T-cell (primary cell): ENCODE measurements at regions of chr14 and their contacts with region 1.

Region 1: GRCh38 chr14:100192672-100193416 is 33.4 kb upstream of the DEGS2 start:
- DNase-seq: peak; percentile 98 to 100 (median 99)
- ATAC-seq: peak; percentile 98 to 99 (median 99)
- H3K4me3 ChIP-seq: peak overlapping the region; percentile 39 to 59
- H3K4me3 Mint-ChIP-seq: peak overlapping the region; percentile 55 to 69 (median 56)
- H3K27ac ChIP-seq: peak overlapping the region; percentile 88
- H3K27ac Mint-ChIP-seq: peak overlapping the region; percentile 94 to 96
- H3K4me1 ChIP-seq: peaks cover 0 to 14% of the 10 kb centered on the region in 2 experiments
- H3K4me1 Mint-ChIP-seq: peaks cover 9 to 11% (median 11%) of the 10 kb centered on the region in 3 donors
- H3K27me3 ChIP-seq: no peaks in the 10 kb centered on the region
- H3K27me3 Mint-ChIP-seq: no peaks in the 10 kb centered on the region

Region 2: GRCh38 chr14:99971087-99971940 is 221.5 kb before region 1 on chr14:
- CTCF ChIA-PET with region 1: interaction called in 1 of 2 experiments, 19 read pairs
- POLR2A ChIA-PET with region 1: no interaction called
- DNase-seq: peak; percentile 49 to 87 (median 72)
- ATAC-seq: peak; percentile 80 to 88 (median 86)
- H3K4me3 ChIP-seq: peak overlapping the region; percentile 25 to 36
- H3K4me3 Mint-ChIP-seq: peak overlapping the region; percentile 73 to 94 (median 76)
- H3K27ac ChIP-seq: no peak overlapping the region
- H3K27ac Mint-ChIP-seq: peak overlapping the region in 1 of 2 donors; percentile 22
- H3K4me1 ChIP-seq: peaks cover 0 to 12% of the 10 kb centered on the region in 2 experiments
- H3K4me1 Mint-ChIP-seq: peaks cover 10 to 20% (median 14%) of the 10 kb centered on the region in 3 donors
- H3K27me3 ChIP-seq: peaks cover 0 to 31% of the 10 kb centered on the region in 2 experiments
- H3K27me3 Mint-ChIP-seq: peaks cover 14 to 16% of the 10 kb centered on the region in 2 donors

Region 3: DNA sequence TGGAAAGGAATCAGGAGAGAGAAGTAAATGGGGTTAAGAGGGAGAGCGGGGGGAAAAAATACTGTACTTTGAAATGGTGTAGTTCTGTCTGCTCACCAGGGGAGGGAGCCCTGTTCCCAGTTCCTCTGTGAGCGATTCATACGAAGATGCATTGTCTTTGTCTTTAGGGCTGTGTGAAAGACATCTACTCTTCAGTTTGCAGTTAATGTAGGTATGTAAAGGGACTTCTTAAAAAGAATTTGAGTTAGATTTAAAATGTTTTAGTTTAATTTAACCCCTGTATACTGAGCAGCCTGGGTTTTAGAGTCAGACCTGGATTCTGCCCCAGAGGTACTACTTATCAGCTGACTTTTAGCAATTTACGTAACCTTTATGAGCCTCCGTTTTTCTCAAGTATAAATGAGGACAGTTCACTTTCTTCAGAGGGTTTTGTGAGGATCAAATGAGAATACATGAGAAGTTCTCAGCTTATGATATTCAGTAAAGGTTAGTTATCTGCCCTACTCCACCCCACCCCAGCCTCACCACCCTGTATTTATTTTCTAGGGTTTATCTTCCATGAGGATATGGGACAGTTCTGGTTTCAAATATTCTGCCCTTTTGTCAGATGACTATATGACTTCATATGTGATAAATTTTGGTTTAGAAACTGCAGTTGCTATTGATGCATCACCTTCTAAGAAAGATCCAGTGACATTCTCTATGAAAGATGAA is 210.2 kb before region 1 on chr14:
- CTCF ChIA-PET with region 1: interaction called, 5 to 24 read pairs
- POLR2A ChIA-PET with region 1: interaction called in 1 of 2 experiments, 3 read pairs
- DNase-seq: peak; percentile 29 to 86 (median 52)
- ATAC-seq: peak; percentile 94 to 95 (median 94)
- H3K4me3 ChIP-seq: no peak overlapping the region
- H3K4me3 Mint-ChIP-seq: no peak overlapping the region
- H3K27ac ChIP-seq: no peak overlapping the region
- H3K27ac Mint-ChIP-seq: no peak overlapping the region
- H3K4me1 ChIP-seq: peaks cover 0 to 16% of the 10 kb centered on the region in 2 experiments
- H3K4me1 Mint-ChIP-seq: peaks cover 8 to 14% (median 13%) of the 10 kb centered on the region in 3 donors
- H3K27me3 ChIP-seq: no peaks in the 10 kb centered on the region
- H3K27me3 Mint-ChIP-seq: no peaks in the 10 kb centered on the region

Region 4: GRCh38 chr14:100096570-100096971 is 96.3 kb before region 1 on chr14:
- CTCF ChIA-PET with region 1: no interaction called
- POLR2A ChIA-PET with region 1: no interaction called
- DNase-seq: no peak
- ATAC-seq: no peak
- H3K4me3 ChIP-seq: no peak overlapping the region
- H3K4me3 Mint-ChIP-seq: peak overlapping the region in 1 of 3 donors; percentile 81
- H3K27ac ChIP-seq: no peak overlapping the region
- H3K27ac Mint-ChIP-seq: peak overlapping the region; percentile 85 to 89
- H3K4me1 ChIP-seq: peaks cover 69 to 90% of the 10 kb centered on the region in 2 experiments
- H3K4me1 Mint-ChIP-seq: peaks cover 94 to 99% (median 95%) of the 10 kb centered on the region in 3 donors
- H3K27me3 ChIP-seq: no peaks in the 10 kb centered on the region
- H3K27me3 Mint-ChIP-seq: no peaks in the 10 kb centered on the region

Region 5: DNA sequence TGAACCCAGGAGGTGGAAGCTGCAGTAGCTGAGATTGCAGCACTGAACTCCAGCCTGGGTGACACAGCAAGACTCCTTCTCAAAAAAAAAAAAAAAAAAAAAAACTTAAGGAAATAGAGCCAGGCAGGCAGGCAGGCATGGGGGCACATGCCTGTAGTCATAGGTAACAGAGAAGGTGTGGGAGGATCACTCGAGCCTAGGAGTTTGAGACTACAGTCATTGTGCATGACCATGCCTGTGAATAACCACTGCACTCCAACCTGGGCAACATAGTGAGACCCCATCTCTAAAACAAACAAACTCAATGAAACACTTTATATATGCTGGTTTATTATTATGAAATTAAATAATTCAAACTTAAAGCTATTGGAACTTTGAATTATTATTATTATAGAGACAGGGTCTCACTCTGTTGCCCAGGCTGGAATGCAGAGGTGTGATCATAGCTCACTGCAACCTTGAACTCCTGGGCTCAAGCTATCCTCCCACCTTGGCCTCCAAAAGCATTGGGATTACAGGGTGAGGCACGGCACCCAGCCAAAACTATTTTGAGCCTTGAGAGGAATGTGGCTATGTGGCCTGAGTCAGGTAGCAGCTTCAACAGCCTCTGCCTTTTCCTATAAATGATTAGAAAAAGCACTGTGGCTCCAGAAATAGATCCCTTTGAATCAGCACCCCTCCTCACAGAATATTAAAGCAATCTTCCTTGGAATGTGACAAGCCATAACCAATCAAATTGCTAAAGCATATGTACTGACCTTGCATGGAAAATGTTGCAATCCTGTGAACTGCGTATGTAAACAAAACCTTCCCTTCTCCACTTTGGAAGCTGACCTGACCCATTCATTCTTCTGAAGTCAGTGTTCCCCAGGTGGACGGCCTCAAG is 11.3 kb after region 1 on chr14:
- CTCF ChIA-PET with region 1: no interaction called
- POLR2A ChIA-PET with region 1: no interaction called
- DNase-seq: no peak
- ATAC-seq: no peak
- H3K4me3 ChIP-seq: no peak overlapping the region
- H3K4me3 Mint-ChIP-seq: no peak overlapping the region
- H3K27ac ChIP-seq: no peak overlapping the region
- H3K27ac Mint-ChIP-seq: no peak overlapping the region
- H3K4me1 ChIP-seq: no peaks in the 10 kb centered on the region
- H3K4me1 Mint-ChIP-seq: no peaks in the 10 kb centered on the region
- H3K27me3 ChIP-seq: no peaks in the 10 kb centered on the region
- H3K27me3 Mint-ChIP-seq: no peaks in the 10 kb centered on the region

Region 6: GRCh38 chr14:100221533-100222223 is 28.8 kb after region 1 on chr14:
- CTCF ChIA-PET with region 1: interaction called, 3 to 18 read pairs
- POLR2A ChIA-PET with region 1: interaction called in 1 of 2 experiments, 3 read pairs
- DNase-seq: peak; percentile 39 to 83 (median 65)
- ATAC-seq: peak; percentile 91 to 95 (median 92)
- H3K4me3 ChIP-seq: peak overlapping the region; percentile 66 to 86
- H3K4me3 Mint-ChIP-seq: no peak overlapping the region
- H3K27ac ChIP-seq: peak overlapping the region; percentile 71
- H3K27ac Mint-ChIP-seq: no peak overlapping the region
- H3K4me1 ChIP-seq: peaks cover 32 to 51% of the 10 kb centered on the region in 2 experiments
- H3K4me1 Mint-ChIP-seq: peaks cover 7 to 23% (median 8%) of the 10 kb centered on the region in 3 donors
- H3K27me3 ChIP-seq: no peaks in the 10 kb centered on the region
- H3K27me3 Mint-ChIP-seq: no peaks in the 10 kb centered on the region

Region 7: GRCh38 chr14:100239840-100240724 is 47.2 kb after region 1 on chr14:
- CTCF ChIA-PET with region 1: interaction called in 1 of 2 experiments, 19 read pairs
- POLR2A ChIA-PET with region 1: interaction called in 1 of 2 experiments, 4 read pairs
- DNase-seq: peak; percentile 74 to 94 (median 83)
- ATAC-seq: peak; percentile 52 to 56 (median 54)
- H3K4me3 ChIP-seq: peak overlapping the region; percentile 79 to 86
- H3K4me3 Mint-ChIP-seq: peak overlapping the region; percentile 88 to 97 (median 92)
- H3K27ac ChIP-seq: peak overlapping the region; percentile 76
- H3K27ac Mint-ChIP-seq: peak overlapping the region; percentile 92 to 95
- H3K4me1 ChIP-seq: peaks cover 25 to 49% of the 10 kb centered on the region in 2 experiments
- H3K4me1 Mint-ChIP-seq: peaks cover 59 to 64% (median 64%) of the 10 kb centered on the region in 3 donors
- H3K27me3 ChIP-seq: no peaks in the 10 kb centered on the region
- H3K27me3 Mint-ChIP-seq: no peaks in the 10 kb centered on the region